Mucosa of descending colon (tissue), 3 donors: ENCODE measurements at regions of chr1 and their contacts with region 1.

Region 1: GRCh38 chr1:215526553-215527151 is 40.5 kb upstream of the KCTD3 start:
- DNase-seq: no peak
- ATAC-seq: no peak
- H3K4me3 ChIP-seq: no peak overlapping the region
- H3K4me1 ChIP-seq: no peaks in the 10 kb centered on the region
- CTCF ChIP-seq: peak; percentile 35

Region 2: DNA sequence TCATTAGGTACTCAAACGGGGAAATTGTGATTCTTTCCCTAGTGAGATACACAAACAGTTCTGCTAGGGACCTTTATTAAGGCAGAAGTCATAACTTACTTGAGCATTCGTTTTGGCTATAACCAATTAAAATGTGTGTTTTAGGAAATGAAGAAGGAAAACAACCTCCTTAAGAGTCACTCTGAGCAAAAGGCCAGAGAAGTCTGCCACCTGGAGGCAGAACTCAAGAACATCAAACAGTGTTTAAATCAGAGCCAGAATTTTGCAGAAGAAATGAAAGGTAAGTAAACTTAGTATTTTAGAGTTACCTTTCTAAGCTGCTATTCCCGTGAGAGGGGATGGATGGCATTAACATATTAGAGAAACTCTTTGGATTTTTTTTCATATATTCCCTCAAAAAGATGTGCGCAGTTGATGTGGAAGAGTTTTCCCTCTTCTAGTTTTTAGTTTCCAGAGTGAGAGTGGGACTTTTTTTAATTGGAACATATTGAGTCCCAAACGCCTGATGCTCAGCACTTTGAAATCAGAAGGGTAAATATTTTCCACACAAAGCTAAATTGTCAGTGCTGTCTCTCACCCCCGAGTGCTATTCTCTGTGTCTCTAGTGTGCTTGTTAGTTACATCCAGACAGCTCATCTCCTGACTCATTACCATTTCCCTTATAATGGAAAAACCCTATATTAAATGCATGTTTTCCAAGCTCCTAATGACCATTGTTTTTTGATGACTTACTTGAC is 888.8 kb before region 1 on chr1:
- intact Hi-C with region 1: loop called in 1 of 2 experiments (anchors 10 kb)
- DNase-seq: peak in 1 of 3 donors; percentile 25
- ATAC-seq: peak; percentile 45
- H3K4me3 ChIP-seq: no peak overlapping the region
- H3K4me1 ChIP-seq: no peaks in the 10 kb centered on the region
- CTCF ChIP-seq: peak; percentile 33